Activated naive CD8-positive, alpha-beta T cell treated with anti-CD3 and anti-CD28 coated beads, Interleukin-2, amount 10 ng/mL, durations not matched to agents 7 days and 5 days (primary cell): ENCODE measurements at regions of chr16 and their contacts with region 1.

Region 1: GRCh38 chr16:67935402-67936123 is 1.1 kb downstream of the PSMB10 start:
- DNase-seq: peak; percentile 90
- ATAC-seq: peak; percentile 84
- H3K4me3 Mint-ChIP-seq: peak overlapping the region; percentile 99
- H3K27ac Mint-ChIP-seq: peak overlapping the region; percentile 96
- H3K4me1 Mint-ChIP-seq: peaks cover 31% of the 10 kb centered on the region
- H3K27me3 Mint-ChIP-seq: no peaks in the 10 kb centered on the region

Region 2: GRCh38 chr16:67833418-67834241 is 101.9 kb before region 1 on chr16:
- POLR2A ChIA-PET with region 1: interaction called, 19 read pairs
- DNase-seq: peak; percentile 94
- ATAC-seq: peak; percentile 98
- H3K4me3 Mint-ChIP-seq: peak overlapping the region; percentile 89
- H3K27ac Mint-ChIP-seq: peak overlapping the region; percentile 85
- H3K4me1 Mint-ChIP-seq: peaks cover 14% of the 10 kb centered on the region
- H3K27me3 Mint-ChIP-seq: no peaks in the 10 kb centered on the region

Region 3: DNA sequence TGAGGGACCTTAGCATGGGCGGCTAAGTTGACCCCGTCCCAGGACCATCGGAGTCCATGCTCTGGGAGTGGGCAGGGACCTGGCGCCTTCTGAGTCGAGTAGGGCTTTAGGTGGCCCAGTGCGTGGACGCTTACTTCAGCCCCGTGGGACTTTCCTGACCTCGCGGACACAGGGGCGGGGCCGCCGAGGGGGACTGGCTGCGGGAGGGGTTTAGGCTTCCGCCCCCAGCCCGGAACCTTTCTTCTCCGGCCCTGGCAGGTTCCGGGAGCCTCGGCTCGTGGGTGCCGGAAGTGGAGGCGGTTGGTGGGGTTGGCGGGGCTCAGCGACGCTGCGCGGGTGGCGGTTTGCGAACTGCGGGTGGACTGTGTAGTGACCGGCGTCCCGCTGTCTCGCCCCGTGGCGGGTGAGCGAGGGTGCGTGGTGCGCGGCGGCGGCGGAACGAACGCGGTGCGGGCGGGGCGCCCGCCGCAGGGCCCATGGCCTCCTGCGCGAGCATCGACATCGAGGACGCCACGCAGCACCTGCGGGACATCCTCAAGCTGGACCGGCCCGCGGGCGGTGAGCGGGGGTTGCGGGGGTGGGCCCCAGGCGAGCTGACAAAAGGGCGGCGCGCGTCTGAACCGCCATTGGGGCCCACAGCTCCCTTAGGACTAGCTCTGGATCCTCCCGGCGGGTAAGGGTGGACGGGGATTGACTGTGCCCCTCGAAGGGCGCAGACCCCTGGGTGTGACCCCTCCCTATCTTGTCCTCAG is 62.6 kb before region 1 on chr16 and contains the start of gene EDC4:
- POLR2A ChIA-PET with region 1: interaction called, 14 read pairs
- DNase-seq: peak; percentile 96
- ATAC-seq: peak; percentile 87
- H3K4me3 Mint-ChIP-seq: peak within 1 kb of the TSS; percentile 89
- H3K27ac Mint-ChIP-seq: peak within 1 kb of the TSS; percentile 92
- H3K4me1 Mint-ChIP-seq: peaks cover 24% of the 10 kb centered on the region
- H3K27me3 Mint-ChIP-seq: no peaks in the 10 kb centered on the region
- total RNA-seq, gene EDC4: 119 to 130 TPM

Region 4: GRCh38 chr16:67946622-67947558 is 11.3 kb after region 1 on chr16:
- POLR2A ChIA-PET with region 1: interaction called, 14 read pairs
- DNase-seq: no peak
- ATAC-seq: no peak
- H3K4me3 Mint-ChIP-seq: no peak overlapping the region
- H3K27ac Mint-ChIP-seq: no peak overlapping the region
- H3K4me1 Mint-ChIP-seq: peaks cover 5% of the 10 kb centered on the region
- H3K27me3 Mint-ChIP-seq: no peaks in the 10 kb centered on the region

Region 5: DNA sequence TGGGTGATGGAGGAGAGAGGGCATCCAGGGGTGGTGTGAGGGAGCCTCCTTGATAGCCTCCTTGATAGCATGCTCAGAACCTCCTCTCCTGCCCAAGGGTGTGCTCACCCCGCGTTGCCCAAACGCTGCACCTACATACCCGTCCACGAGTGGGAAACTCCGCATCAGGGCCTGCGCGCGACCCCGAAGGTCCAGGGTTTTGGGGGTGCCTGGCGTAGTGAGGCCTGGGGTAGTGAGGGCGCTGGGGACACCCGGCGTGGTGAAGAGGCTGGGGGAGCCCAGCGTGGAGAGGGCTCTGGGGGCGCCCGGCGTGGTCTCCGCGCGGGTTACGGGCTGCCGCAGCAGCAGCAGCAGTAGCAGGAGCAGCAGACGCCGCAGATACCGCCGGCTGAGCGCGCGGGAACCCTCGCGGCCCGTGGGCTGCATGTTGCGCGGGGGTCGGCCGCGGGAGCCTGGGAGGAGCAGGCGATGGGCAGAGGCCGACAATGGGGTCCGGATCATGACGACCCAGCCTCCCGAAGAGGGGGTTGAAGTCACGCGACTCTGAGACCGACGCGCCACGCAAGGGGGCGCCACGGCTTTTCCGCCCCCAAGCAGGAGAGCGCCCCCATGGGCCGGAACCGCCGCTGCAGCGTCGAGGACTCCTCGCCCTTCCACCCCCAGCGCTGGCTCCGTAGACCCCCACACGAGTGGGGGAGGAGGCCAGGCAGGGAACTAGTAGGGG is 44.6 kb after region 1 on chr16 and contains the start of gene DPEP3:
- POLR2A ChIA-PET with region 1: interaction called, 15 read pairs
- DNase-seq: no peak
- ATAC-seq: no peak
- H3K4me3 Mint-ChIP-seq: no peak within 1 kb of the TSS
- H3K27ac Mint-ChIP-seq: no peak within 1 kb of the TSS
- H3K4me1 Mint-ChIP-seq: peaks cover 20% of the 10 kb centered on the region
- H3K27me3 Mint-ChIP-seq: peaks cover 5% of the 10 kb centered on the region
- total RNA-seq, gene DPEP3: 0.54 to 0.64 TPM

Region 6: DNA sequence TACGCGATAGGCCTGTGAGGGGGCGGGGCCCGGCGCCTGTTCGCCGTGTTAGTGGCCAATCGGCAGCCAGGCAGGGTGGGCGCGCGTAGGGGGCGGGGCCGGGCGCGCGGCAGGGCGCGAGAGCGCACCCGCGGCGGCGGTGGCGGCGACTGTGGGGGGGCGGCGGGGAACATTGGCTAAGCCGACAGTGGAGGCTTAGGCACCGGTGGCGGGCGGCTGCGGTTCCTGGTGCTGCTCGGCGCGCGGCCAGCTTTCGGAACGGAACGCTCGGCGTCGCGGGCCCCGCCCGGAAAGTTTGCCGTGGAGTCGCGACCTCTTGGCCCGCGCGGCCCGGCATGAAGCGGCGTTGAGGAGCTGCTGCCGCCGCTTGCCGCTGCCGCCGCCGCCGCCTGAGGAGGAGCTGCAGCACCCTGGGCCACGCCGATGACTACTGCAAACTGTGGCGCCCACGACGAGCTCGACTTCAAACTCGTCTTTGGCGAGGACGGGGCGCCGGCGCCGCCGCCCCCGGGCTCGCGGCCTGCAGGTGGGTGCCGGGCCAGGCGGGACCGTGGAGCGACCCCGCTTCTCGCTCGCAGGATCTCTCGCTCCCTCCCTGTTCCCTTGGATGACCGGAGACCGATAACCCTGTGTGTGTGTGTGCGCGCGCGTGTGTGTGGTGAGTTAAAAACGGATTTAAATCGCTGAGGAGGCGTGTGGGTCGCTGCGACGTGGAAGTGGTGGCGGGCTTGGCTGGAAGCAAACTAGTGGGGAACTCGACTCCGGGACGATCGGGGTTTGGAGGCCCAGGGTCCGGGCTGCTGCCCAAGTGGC is 149.9 kb after region 1 on chr16 and contains the start of gene NFATC3:
- POLR2A ChIA-PET with region 1: interaction called, 12 read pairs
- DNase-seq: peak; percentile 99
- ATAC-seq: peak; percentile 70
- H3K4me3 Mint-ChIP-seq: peak within 1 kb of the TSS; percentile 99
- H3K27ac Mint-ChIP-seq: peak within 1 kb of the TSS; percentile 90
- H3K4me1 Mint-ChIP-seq: peaks cover 53% of the 10 kb centered on the region
- H3K27me3 Mint-ChIP-seq: no peaks in the 10 kb centered on the region
- total RNA-seq, gene NFATC3: 132 to 139 TPM